ENCODE measurements at regions of chr14 and their contacts with region 1.

Region 1: GRCh38 chr14:61475316-61475715 is 153.9 kb downstream of the PRKCH start:
- DNase-seq: no peak
- H3K4me3 ChIP-seq: no peak overlapping the region
- CTCF ChIP-seq: peak; percentile 35

Region 2: GRCh38 chr14:61503167-61503801 is 28.0 kb after region 1 on chr14:
- CTCF ChIA-PET with region 1: interaction called, 36 read pairs
- POLR2A ChIA-PET with region 1: no interaction called
- DNase-seq: no peak
- H3K4me3 ChIP-seq: no peak overlapping the region
- CTCF ChIP-seq: no peak

Region 3: GRCh38 chr14:61553725-61554641 is 78.7 kb after region 1 on chr14:
- CTCF ChIA-PET with region 1: interaction called, 16 read pairs
- POLR2A ChIA-PET with region 1: interaction called, 3 read pairs
- DNase-seq: peak; percentile 99
- H3K4me3 ChIP-seq: no peak overlapping the region
- CTCF ChIP-seq: no peak

Region 4: DNA sequence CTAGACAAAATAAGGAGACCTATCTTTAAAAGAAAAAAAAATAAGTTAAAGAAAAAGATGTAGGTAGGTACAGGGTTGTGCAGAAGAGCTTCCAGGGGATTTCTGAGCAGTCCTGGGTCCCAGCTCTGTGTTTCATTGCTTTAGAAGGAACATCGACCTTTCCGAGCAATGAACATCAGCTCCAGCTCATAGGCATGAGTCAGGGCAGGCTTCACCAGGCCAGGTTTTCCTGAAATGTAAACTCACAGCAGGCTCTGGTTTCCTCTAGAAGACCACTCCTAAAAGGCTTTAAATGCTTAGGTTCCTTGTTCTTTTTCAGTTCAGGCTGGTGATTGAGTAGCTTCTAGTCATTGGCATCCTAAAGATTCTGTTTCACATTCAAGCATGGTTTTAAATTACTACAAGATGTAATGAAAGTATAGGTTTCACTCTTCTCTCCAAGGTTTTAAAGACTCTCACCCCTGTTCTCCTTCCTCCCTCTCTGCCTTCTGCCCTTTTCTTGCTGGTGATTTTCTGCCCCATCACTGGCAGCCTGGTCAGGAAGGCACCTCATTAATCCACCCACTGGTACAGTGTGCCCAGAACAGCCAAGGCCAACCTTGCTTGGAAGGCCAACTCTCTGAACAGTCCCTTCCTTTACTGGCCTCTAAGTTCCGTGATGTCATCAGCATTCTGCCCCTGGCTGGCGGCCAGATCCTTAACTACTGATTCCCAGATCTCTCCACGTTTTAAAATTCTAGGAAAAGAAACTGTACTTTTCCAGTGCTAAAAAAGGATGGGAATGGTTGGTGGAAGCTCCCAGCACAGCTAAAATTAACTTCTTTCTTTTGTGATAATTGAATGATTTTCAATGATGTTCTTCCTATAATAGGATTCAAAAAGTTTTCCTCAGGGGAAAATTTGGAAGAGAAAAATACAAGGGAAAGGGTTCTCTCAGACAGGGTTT is 110.6 kb after region 1 on chr14:
- CTCF ChIA-PET with region 1: interaction called, 13 read pairs
- POLR2A ChIA-PET with region 1: no interaction called
- DNase-seq: no peak
- H3K4me3 ChIP-seq: no peak overlapping the region
- CTCF ChIP-seq: no peak

Region 5: GRCh38 chr14:61730756-61731373 is 255.5 kb after region 1 on chr14:
- CTCF ChIA-PET with region 1: interaction called, 14 read pairs
- POLR2A ChIA-PET with region 1: no interaction called
- DNase-seq: no peak
- H3K4me3 ChIP-seq: no peak overlapping the region
- CTCF ChIP-seq: no peak